Activated B cell treated with CpG ODN at 0.5 μM for 24 hours (primary cell): ENCODE measurements at regions of chr2 and their contacts with region 1.

Region 1: GRCh38 chr2:61764035-61764800 is 89.6 kb downstream of the FAM161A start:
- DNase-seq: peak; percentile 88
- ATAC-seq: peak; percentile 98
- H3K4me3 Mint-ChIP-seq: peak overlapping the region; percentile 95
- H3K27ac Mint-ChIP-seq: peak overlapping the region; percentile 94
- H3K4me1 Mint-ChIP-seq: peaks cover 16% of the 10 kb centered on the region
- H3K27me3 Mint-ChIP-seq: no peaks in the 10 kb centered on the region
- CTCF ChIP-seq: no peak

Region 2: DNA sequence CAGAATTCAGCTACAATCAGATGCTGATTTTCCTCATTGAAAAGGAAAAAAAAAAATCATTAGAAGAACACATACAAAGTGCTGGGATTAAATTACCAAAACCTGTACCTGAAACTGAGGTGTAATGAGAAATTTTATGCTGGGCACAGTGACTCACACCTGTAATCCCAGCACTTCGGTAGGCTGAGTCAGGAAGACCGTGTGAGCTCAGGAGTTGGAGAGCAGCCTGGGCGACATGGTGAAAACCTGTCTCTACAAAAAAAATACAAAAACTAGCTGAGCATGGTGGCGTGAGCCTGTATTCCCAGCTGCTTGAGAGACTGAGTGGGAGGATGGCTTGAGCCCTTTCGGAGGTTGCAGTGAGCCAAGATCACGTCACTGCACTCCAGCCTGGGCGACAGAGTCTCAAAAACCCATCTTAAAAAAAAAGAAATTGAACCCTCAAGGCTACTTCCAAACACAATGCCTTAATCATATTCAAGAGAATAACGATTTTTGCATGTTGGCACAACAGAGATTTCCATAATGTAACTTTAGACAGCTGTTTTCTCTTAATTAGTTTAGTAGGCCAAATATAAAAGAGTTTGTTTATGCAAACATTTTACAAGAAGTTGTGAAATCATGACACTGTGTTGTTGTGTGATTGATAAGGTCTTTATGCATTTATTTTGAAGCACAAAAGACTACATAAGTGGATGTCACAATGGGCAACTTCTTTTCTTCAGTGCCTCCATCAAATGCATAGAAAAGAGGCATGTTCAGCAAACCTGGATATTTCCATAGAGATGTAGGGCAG is 25.8 kb after region 1 on chr2:
- CTCF ChIA-PET with region 1: no interaction called
- POLR2A ChIA-PET with region 1: no interaction called
- intact Hi-C with region 1: loop called (anchors 1 kb)
- DNase-seq: no peak
- ATAC-seq: no peak
- H3K4me3 Mint-ChIP-seq: no peak overlapping the region
- H3K27ac Mint-ChIP-seq: no peak overlapping the region
- H3K4me1 Mint-ChIP-seq: peaks cover 5% of the 10 kb centered on the region
- H3K27me3 Mint-ChIP-seq: peaks cover 9% of the 10 kb centered on the region
- CTCF ChIP-seq: no peak

Region 3: GRCh38 chr2:61854474-61855182 is 90.4 kb after region 1 on chr2:
- CTCF ChIA-PET with region 1: no interaction called
- POLR2A ChIA-PET with region 1: interaction called, 6 read pairs
- intact Hi-C with region 1: loop called (anchors 1 kb)
- DNase-seq: peak; percentile 69
- ATAC-seq: peak; percentile 86
- H3K4me3 Mint-ChIP-seq: peak overlapping the region; percentile 94
- H3K27ac Mint-ChIP-seq: peak overlapping the region; percentile 95
- H3K4me1 Mint-ChIP-seq: peaks cover 19% of the 10 kb centered on the region
- H3K27me3 Mint-ChIP-seq: no peaks in the 10 kb centered on the region
- CTCF ChIP-seq: no peak